Heart left ventricle (tissue), 16 donors: ENCODE measurements at regions of chr20 and their contacts with region 1.

Region 1: DNA sequence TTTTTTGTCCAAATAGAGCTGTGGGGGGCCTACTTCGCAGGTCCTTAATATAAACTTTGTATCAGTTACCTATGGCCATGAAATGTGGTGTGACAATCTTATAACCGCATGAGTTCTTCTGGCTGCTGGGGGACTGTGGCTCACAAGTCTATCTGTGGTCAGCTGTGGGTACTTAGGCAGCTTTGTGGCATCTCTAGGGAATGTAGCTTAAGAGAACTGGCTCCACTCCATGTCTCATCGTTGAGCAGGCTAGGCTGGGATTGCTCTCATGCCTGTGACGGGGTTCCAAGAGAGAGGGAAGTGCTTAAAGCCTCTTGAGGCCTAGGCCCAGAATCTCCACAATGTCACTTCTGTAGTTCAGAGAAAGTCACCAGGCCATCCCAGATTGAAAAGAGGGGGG is 140.5 kb downstream of the BTBD3 start:
- DNase-seq: no peak
- ATAC-seq: no peak
- H3K4me3 ChIP-seq: no peak overlapping the region
- H3K27ac ChIP-seq: no peak overlapping the region
- H3K4me1 ChIP-seq: peaks cover 0 to 6% (median 0%) of the 10 kb centered on the region in 12 donors
- H3K27me3 ChIP-seq: no peaks in the 10 kb centered on the region
- CTCF ChIP-seq: no peak
- POLR2A ChIP-seq: no peak

Region 2: GRCh38 chr20:11935212-11936154 is 122.7 kb before region 1 on chr20:
- intact Hi-C with region 1: no loop called
- DNase-seq: peak in 1 of 5 donors; percentile 40
- ATAC-seq: peak in 2 of 4 donors; percentile 10 to 29
- H3K4me3 ChIP-seq: no peak overlapping the region
- H3K27ac ChIP-seq: no peak overlapping the region
- H3K4me1 ChIP-seq: peaks cover 0 to 3% (median 0%) of the 10 kb centered on the region in 12 donors
- H3K27me3 ChIP-seq: no peaks in the 10 kb centered on the region
- CTCF ChIP-seq: no peak
- POLR2A ChIP-seq: no peak

Region 3: GRCh38 chr20:12023194-12023795 is 34.9 kb before region 1 on chr20:
- intact Hi-C with region 1: no loop called
- DNase-seq: no peak
- ATAC-seq: no peak
- H3K4me3 ChIP-seq: no peak overlapping the region
- H3K27ac ChIP-seq: no peak overlapping the region
- H3K4me1 ChIP-seq: peaks cover 0 to 2% (median 0%) of the 10 kb centered on the region in 12 donors
- H3K27me3 ChIP-seq: no peaks in the 10 kb centered on the region
- CTCF ChIP-seq: no peak
- POLR2A ChIP-seq: no peak

Region 4: DNA sequence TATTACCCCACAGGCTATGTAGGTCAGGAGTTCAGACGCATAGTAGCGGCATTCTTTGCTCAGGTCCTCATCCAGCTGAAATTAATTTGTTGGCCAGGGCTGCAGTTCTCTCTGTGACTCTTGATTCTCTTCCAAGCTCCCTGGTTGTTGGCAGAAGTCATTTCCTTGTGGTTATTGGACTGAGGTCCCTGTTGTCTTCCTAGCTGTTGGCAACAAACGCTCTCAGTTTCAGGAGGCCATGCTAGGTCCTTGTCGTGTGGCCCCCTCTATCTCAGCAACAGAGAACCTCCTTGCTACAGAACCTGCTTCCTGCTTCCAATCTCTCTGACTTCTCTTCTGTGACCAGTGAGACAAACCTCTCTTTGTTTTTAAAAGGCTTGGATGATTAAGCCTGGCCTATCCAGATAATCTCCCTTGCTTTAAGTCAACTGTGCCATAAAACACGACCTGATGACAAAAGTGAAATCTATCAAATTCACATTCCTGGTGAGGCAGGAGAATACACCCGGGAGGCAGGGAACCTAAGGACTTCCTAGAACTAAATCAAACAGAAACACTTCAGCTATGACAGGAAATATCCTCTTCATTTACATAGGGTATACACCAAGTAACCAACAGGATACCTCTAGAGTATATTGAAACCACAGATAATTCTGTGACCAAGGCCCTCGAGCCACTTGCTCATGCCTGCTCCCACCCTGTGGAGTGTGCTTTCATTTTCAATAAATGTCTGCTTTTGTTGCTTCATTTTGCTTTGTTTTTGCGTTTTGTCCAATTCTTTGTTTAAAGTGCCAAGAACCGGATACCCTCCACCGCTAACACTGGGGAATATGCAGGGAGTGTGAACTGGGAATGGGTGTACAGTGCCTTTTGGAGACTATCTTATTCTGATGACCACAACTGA is 55.5 kb after region 1 on chr20:
- intact Hi-C with region 1: loop called in 1 of 10 experiments (anchors 5 kb)
- DNase-seq: peak in 4 of 5 donors; percentile 39 to 51 (median 44)
- ATAC-seq: peak; percentile 78 to 94 (median 90)
- H3K4me3 ChIP-seq: peak overlapping the region in 1 of 12 donors; percentile 4
- H3K27ac ChIP-seq: peak overlapping the region in 10 of 12 donors; percentile 14 to 65 (median 39)
- H3K4me1 ChIP-seq: peaks cover 0 to 19% (median 5%) of the 10 kb centered on the region in 12 donors
- H3K27me3 ChIP-seq: no peaks in the 10 kb centered on the region
- CTCF ChIP-seq: peak in 1 of 12 donors; percentile 8
- POLR2A ChIP-seq: no peak

Region 5: DNA sequence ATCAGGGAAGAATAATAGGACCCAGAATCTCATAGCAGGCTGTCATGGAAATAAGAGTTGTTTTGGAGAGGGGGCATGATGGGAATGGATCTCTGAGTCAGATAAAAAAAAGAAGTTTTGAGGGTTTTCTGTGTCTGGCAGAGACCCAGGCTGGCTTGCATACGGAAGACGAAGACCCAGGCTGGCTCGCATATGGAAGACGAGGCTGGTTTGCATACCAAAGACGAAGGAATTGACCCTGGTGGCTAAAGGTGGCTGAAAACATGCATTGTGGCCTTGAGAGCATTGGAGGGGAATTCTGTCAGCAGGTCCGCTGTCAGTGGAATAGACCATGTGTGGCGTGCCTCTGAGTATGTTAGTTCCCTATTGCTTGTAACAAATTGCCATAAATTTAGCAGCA is 194.6 kb after region 1 on chr20:
- intact Hi-C with region 1: no loop called
- DNase-seq: no peak
- ATAC-seq: no peak
- H3K4me3 ChIP-seq: no peak overlapping the region
- H3K27ac ChIP-seq: no peak overlapping the region
- H3K4me1 ChIP-seq: no peaks in the 10 kb centered on the region
- H3K27me3 ChIP-seq: no peaks in the 10 kb centered on the region
- CTCF ChIP-seq: no peak
- POLR2A ChIP-seq: no peak

Region 6: DNA sequence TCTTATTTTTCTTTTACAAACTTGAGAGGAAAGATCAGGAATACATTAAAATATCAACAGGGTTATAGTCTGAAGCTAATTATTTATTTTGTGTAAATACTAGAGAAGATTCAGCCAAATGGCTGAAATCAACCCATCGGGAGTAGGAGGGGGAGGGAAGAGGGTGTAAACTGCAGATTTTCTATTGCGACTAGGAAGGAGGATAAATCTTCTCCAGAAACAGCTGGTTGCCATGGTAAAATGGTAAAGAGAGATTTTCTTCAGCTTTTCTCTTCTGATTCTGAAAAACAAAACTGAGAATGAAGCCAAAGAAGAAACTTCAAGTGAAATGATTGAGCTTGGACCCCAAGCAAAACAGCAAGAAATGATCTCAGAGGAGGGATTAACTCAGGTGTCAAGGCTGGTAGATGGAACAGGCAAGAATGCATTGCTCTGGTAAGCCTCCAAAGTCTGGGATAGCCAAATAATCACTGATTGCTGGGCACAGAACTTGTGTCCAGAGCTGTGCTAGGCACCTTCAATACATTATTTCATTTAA is 757.1 kb after region 1 on chr20:
- intact Hi-C with region 1: no loop called
- DNase-seq: no peak
- ATAC-seq: no peak
- H3K4me3 ChIP-seq: no peak overlapping the region
- H3K27ac ChIP-seq: no peak overlapping the region
- H3K4me1 ChIP-seq: no peaks in the 10 kb centered on the region
- H3K27me3 ChIP-seq: no peaks in the 10 kb centered on the region
- CTCF ChIP-seq: no peak
- POLR2A ChIP-seq: no peak